ENCODE measurements at regions of chr9 and their contacts with region 1.

Region 1: DNA sequence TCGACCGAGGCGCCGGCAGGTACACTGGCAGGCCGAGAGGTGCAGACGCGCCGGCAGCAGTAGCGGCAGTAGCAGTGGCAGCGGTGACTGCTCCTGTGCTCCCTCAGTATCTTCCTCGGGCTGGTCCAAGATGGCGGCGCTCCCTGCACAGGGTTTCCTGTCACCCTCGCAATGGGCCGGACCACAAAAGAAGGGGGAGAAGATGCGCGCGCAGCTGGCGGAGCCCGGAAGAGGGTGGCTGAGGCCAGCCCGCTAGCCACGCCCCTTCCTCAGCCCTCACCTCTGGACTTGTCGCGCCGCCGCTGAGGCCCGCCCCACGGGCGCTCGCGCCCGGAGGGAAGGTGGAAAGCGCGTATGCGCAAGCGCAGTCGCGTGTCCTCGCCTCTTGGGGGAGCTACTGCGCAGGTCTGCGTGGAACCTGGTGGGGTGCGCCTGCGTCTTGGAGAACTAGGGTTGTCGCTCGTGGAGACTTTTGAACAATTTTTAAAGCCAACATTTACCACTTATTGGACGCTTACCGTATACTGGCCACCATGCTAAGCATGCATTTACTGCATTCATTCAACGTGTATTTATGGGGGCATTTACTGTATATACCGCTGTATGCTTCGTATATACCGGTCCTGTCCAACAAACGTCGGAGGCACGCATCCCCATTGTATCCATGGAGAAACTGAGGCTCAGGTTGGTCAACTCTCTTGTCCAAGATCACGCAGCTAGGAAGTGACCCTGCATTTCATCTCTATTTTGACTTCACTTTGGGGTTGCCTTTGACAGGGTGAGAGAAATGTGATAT is at the start of gene RAB14:
- DNase-seq: peak; percentile 100
- ATAC-seq: peak; percentile 89
- H3K4me3 ChIP-seq: peak within 1 kb of the TSS; percentile 80 to 93 (median 82)
- H3K4me3 Mint-ChIP-seq: peak within 1 kb of the TSS; percentile 97
- H3K27ac ChIP-seq: peak within 1 kb of the TSS; percentile 79 to 91
- H3K27ac Mint-ChIP-seq: peak within 1 kb of the TSS; percentile 98
- H3K4me1 ChIP-seq: peaks cover 36 to 47% of the 10 kb centered on the region in 2 donors
- H3K4me1 Mint-ChIP-seq: peaks cover 55% of the 10 kb centered on the region
- H3K27me3 ChIP-seq: no peaks in the 10 kb centered on the region
- H3K27me3 Mint-ChIP-seq: no peaks in the 10 kb centered on the region
- CTCF ChIP-seq: peak; percentile 51
- total RNA-seq, gene RAB14: 50.9 and 52.6 TPM in 2 replicates

Region 2: DNA sequence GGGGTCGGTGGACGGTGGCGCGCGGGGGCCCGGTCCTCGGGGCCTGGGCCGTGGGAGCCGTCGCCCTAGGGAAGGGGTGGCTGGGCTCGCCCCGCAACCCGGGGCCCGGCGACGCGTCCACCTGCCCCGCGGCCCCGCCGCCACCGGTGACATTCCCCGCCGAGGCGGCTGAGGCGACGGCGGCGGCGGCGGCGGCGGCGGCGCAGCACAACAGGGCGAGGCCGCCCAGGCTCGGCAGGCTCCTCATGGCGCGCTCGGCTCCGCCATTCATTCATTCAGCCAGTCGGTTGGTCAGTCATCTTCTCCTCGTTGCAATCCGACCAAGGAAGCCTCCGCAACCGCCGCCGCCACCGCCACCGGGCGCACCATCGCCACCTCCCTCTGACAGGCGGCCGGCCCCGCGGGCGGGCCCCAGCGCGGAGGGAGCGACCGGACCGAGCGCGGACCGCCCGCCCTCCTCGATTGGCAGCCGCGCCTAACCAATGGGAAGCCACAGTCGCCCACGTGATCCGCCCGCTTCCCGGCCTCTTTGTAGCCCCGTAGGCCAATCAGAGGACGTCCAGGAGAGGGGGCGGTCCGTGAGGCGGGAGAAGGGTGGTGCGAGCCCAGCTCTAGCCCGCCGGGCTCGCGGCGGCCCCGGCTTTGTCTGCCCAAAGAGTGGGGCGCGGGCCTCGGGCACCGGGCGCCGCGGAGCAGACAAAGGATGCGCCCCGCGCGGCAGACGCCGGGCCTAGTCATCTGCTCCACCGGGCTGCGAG is 487.7 kb before region 1 on chr9 and contains the start of gene MEGF9:
- CTCF ChIA-PET with region 1: no interaction called
- POLR2A ChIA-PET with region 1: no interaction called
- intact Hi-C with region 1: loop called (anchors 5 kb)
- DNase-seq: peak; percentile 97
- ATAC-seq: peak; percentile 94
- H3K4me3 ChIP-seq: peak within 1 kb of the TSS; percentile 56 to 81 (median 68)
- H3K4me3 Mint-ChIP-seq: peak within 1 kb of the TSS; percentile 88
- H3K27ac ChIP-seq: peak within 1 kb of the TSS; percentile 43 to 72
- H3K27ac Mint-ChIP-seq: peak within 1 kb of the TSS; percentile 89
- H3K4me1 ChIP-seq: peaks cover 41 to 43% of the 10 kb centered on the region in 2 donors
- H3K4me1 Mint-ChIP-seq: peaks cover 38% of the 10 kb centered on the region
- H3K27me3 ChIP-seq: no peaks in the 10 kb centered on the region
- H3K27me3 Mint-ChIP-seq: no peaks in the 10 kb centered on the region
- CTCF ChIP-seq: no peak
- total RNA-seq, gene MEGF9: 11.3 and 11.6 TPM in 2 replicates

Region 3: GRCh38 chr9:120985810-120986222 is 216.1 kb before region 1 on chr9:
- CTCF ChIA-PET with region 1: no interaction called
- POLR2A ChIA-PET with region 1: no interaction called
- intact Hi-C with region 1: loop called (anchors 1 kb)
- DNase-seq: peak; percentile 26
- ATAC-seq: no peak
- H3K4me3 ChIP-seq: no peak overlapping the region
- H3K4me3 Mint-ChIP-seq: no peak overlapping the region
- H3K27ac ChIP-seq: no peak overlapping the region
- H3K27ac Mint-ChIP-seq: no peak overlapping the region
- H3K4me1 ChIP-seq: peaks cover 0 to 3% of the 10 kb centered on the region in 2 donors
- H3K4me1 Mint-ChIP-seq: peaks cover 4% of the 10 kb centered on the region
- H3K27me3 ChIP-seq: no peaks in the 10 kb centered on the region
- H3K27me3 Mint-ChIP-seq: no peaks in the 10 kb centered on the region
- CTCF ChIP-seq: no peak

Region 4: GRCh38 chr9:121121582-121122087 is 80.3 kb before region 1 on chr9:
- CTCF ChIA-PET with region 1: no interaction called
- POLR2A ChIA-PET with region 1: interaction called, 5 read pairs
- intact Hi-C with region 1: loop called (anchors 1 kb)
- DNase-seq: peak; percentile 95
- ATAC-seq: peak; percentile 100
- H3K4me3 ChIP-seq: peak overlapping the region; percentile 44 to 78 (median 65)
- H3K4me3 Mint-ChIP-seq: peak overlapping the region; percentile 86
- H3K27ac ChIP-seq: peak overlapping the region; percentile 52 to 75
- H3K27ac Mint-ChIP-seq: peak overlapping the region; percentile 90
- H3K4me1 ChIP-seq: peaks cover 11 to 19% of the 10 kb centered on the region in 2 donors
- H3K4me1 Mint-ChIP-seq: peaks cover 42% of the 10 kb centered on the region
- H3K27me3 ChIP-seq: no peaks in the 10 kb centered on the region
- H3K27me3 Mint-ChIP-seq: no peaks in the 10 kb centered on the region
- CTCF ChIP-seq: peak; percentile 28

Region 5: DNA sequence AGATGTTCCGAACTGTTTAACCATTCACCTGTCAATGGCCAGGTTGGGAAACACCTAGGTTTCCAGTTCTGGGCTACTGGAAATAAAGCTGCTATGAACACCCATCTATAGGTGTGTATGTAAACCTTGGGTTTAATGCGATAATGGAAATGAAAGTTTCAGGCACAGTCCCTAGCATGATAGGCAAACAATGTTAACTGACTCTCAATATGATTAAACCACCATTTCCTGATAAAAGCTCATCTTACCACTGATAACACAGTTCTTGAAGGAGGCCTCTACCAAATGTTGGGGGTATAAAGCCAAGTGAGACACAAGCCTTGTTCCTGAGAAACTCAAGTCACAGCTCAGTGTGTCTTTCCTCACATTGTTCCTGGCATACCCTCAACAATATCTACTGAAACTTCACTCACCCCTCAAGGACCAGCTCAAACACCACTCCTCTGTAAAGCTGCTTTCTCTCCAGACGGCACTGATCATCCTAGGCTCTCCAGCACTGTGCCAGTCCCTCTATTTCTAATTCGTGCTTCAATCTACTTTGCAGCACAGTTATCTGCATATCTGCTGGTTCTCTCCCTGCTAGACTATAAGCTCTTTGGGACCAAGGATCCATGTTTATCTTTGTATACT is 16.0 kb before region 1 on chr9:
- CTCF ChIA-PET with region 1: interaction called, 9 read pairs
- POLR2A ChIA-PET with region 1: interaction called, 3 read pairs
- intact Hi-C with region 1: loop called (anchors 2 kb)
- DNase-seq: no peak
- ATAC-seq: no peak
- H3K4me3 ChIP-seq: no peak overlapping the region
- H3K4me3 Mint-ChIP-seq: peak overlapping the region; percentile 23
- H3K27ac ChIP-seq: peak overlapping the region; percentile 34 to 64
- H3K27ac Mint-ChIP-seq: peak overlapping the region; percentile 66
- H3K4me1 ChIP-seq: peaks cover 36 to 43% of the 10 kb centered on the region in 2 donors
- H3K4me1 Mint-ChIP-seq: peaks cover 59% of the 10 kb centered on the region
- H3K27me3 ChIP-seq: no peaks in the 10 kb centered on the region
- H3K27me3 Mint-ChIP-seq: no peaks in the 10 kb centered on the region
- CTCF ChIP-seq: no peak

Region 6: GRCh38 chr9:121267689-121268597 is 66.0 kb after region 1 on chr9 and contains the start of gene GSN:
- CTCF ChIA-PET with region 1: interaction called, 6 read pairs
- POLR2A ChIA-PET with region 1: interaction called, 3 read pairs
- intact Hi-C with region 1: loop called (anchors 5 kb)
- DNase-seq: peak; percentile 61
- ATAC-seq: peak; percentile 91
- H3K4me3 ChIP-seq: peak within 1 kb of the TSS; percentile 62 to 78 (median 74)
- H3K4me3 Mint-ChIP-seq: peak within 1 kb of the TSS; percentile 91
- H3K27ac ChIP-seq: no peak within 1 kb of the TSS
- H3K27ac Mint-ChIP-seq: peak within 1 kb of the TSS; percentile 68
- H3K4me1 ChIP-seq: peaks cover 13 to 41% of the 10 kb centered on the region in 2 donors
- H3K4me1 Mint-ChIP-seq: peaks cover 32% of the 10 kb centered on the region
- H3K27me3 ChIP-seq: no peaks in the 10 kb centered on the region
- H3K27me3 Mint-ChIP-seq: no peaks in the 10 kb centered on the region
- CTCF ChIP-seq: no peak
- total RNA-seq, gene GSN: 45.4 and 45.9 TPM in 2 replicates

Region 7: DNA sequence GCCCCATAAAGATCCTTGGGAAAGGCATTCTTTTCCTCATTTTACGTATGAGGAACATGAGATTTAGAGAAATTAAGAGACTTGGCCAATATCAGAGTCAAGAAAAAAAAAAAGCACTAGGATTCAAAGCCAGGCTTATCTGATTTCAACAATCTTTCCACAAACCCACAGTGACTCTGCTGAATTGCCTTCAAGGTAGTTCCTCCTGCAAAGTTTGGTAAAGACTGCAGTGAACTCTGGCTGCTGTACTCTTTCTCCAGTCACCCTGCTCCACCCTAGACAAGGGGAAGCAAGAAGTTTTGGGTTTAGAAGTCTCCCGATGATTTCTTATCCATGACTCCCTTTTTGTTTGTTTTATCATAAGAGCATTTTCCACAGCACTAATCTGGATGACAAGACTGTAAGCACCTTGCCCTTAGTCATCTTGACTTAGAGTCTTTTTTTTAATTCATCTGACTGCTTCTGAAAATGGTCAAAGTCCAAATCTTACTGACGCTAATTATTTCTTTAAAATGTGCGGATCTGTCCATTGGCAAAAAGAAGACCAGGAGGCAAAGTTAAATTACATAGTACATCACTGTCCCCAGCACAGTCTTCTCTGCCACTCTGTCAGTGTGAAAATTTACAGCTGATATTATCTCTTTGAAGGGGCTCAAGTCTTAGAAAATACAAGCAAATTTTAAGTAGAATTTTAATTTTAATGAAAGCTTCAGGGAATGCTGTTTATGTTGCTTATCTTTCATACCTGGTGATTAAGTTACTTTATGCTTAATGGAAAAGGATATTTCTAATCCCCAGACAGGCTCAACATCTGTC is 711.1 kb after region 1 on chr9:
- CTCF ChIA-PET with region 1: no interaction called
- POLR2A ChIA-PET with region 1: no interaction called
- intact Hi-C with region 1: no loop called
- DNase-seq: no peak
- ATAC-seq: no peak
- H3K4me3 ChIP-seq: no peak overlapping the region
- H3K4me3 Mint-ChIP-seq: no peak overlapping the region
- H3K27ac ChIP-seq: no peak overlapping the region
- H3K27ac Mint-ChIP-seq: no peak overlapping the region
- H3K4me1 ChIP-seq: no peaks in the 10 kb centered on the region
- H3K4me1 Mint-ChIP-seq: peaks cover 3% of the 10 kb centered on the region
- H3K27me3 ChIP-seq: no peaks in the 10 kb centered on the region
- H3K27me3 Mint-ChIP-seq: no peaks in the 10 kb centered on the region
- CTCF ChIP-seq: no peak